ENCODE measurements at regions of chr6 and their contacts with region 1.

Region 1: DNA sequence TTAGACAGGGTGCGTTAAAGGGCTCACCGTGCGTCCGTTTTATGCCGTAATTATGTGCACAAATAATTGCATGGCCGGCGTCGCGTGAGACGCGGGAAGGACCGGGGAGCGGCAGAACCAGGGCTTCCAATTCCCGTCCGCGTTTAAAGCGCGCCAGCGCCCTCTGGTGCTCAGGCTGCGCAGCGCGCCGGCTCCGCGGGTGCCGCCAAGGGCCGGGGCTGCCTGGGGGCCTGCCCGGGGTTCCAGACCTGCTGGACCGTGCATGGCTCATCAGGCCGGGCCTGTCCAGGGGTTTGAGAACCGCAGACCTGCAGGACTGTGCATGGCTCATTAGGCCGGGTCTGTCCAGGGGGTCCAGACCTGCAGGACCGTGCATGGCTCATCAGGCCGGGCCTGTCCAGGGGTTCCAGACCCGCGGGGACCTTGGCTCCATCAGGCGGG is 369.0 kb downstream of the THBS2 start:
- DNase-seq: peak; percentile 85
- H3K4me3 ChIP-seq: peak overlapping the region in 2 of 4 donors; percentile 21 to 29
- H3K27ac ChIP-seq: no peak overlapping the region
- H3K4me1 ChIP-seq: peaks cover 0 to 17% (median 6%) of the 10 kb centered on the region in 4 donors
- H3K27me3 ChIP-seq: no peaks in the 10 kb centered on the region
- CTCF ChIP-seq: peak; percentile 72 to 97 (median 89)
- EP300 ChIP-seq: no peak
- POLR2A ChIP-seq: no peak

Region 2: DNA sequence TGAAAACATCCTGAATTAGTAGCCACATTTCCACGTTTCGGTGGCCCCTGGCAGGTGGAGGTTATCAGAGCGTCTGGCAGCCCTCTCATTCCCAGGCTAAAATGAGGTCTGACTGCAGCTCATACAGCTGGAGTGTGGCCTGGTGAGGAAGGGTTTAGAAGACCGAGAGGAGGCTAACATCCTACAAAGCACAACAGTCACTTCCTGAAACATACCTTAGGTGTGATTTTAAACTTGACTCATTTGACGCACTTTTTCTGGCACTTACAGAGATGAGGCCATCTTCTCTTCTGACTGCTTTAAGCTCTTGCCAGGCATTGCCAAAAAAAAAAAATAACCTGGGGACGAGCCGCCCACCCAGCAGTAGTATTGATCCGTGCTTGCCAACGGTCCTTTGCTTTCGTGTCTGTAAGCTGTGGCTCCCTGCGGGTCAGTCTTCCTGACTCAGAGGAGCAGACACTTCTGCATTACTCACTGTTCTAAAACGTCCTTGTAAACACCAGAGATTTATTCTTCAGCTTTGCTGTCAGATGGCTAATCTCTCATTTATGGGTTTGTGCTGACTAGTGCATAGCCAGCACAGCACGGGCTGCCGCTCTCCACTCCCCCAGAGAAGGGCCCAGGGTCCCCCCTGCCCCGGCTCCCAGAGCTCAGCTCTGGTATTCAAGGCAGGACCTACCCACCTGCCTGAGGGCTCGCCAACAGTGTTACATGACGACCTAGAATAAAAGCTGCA is 727.2 kb before region 1 on chr6:
- intact Hi-C with region 1: loop called (anchors 10 kb)
- DNase-seq: peak; percentile 74
- H3K4me3 ChIP-seq: peak overlapping the region in 2 of 4 donors; percentile 3 to 28
- H3K27ac ChIP-seq: peak overlapping the region; percentile 42 to 83 (median 78)
- H3K4me1 ChIP-seq: peaks cover 2 to 80% (median 62%) of the 10 kb centered on the region in 4 donors
- H3K27me3 ChIP-seq: no peaks in the 10 kb centered on the region
- CTCF ChIP-seq: no peak
- EP300 ChIP-seq: peak; percentile 46 to 95 (median 78)
- POLR2A ChIP-seq: no peak

Region 3: DNA sequence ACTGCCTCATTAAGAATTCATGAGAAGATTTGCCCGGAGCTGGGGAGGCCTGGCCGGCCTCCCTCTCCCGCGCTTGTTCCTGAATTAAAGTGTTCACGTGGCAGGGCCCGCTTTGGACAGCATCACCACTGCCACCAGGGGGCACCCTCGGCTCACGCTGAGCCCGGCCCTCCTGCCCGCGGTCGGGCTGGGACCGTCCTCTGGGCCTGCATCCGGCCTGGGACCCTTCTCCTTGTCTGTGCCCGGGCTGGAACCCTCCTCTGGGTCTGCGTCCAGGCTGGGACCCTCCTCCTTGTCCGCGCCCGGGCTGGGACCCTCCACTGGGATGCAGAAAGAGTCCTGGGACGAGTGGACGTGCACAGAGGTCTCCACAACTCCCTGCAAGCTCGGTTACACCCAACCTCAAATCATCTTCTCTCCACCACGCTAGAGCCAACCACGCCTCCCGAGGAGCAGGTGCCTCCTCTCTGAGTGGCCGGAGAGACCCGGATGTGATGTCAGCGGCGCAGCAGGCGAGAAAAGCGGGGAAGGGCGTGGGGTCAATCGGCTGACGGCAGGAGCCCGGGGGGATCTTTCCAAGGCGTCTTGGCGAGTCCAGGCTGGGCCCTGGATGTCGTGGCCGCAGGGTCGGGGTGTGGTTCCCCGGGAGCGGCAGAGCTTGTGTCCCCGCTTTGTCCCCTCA is 514.2 kb before region 1 on chr6:
- intact Hi-C with region 1: loop called (anchors 1 kb)
- DNase-seq: peak; percentile 89
- H3K4me3 ChIP-seq: no peak overlapping the region
- H3K27ac ChIP-seq: no peak overlapping the region
- H3K4me1 ChIP-seq: peaks cover 0 to 29% (median 16%) of the 10 kb centered on the region in 4 donors
- H3K27me3 ChIP-seq: no peaks in the 10 kb centered on the region
- CTCF ChIP-seq: peak; percentile 78 to 94 (median 86)
- EP300 ChIP-seq: no peak
- POLR2A ChIP-seq: no peak

Region 4: DNA sequence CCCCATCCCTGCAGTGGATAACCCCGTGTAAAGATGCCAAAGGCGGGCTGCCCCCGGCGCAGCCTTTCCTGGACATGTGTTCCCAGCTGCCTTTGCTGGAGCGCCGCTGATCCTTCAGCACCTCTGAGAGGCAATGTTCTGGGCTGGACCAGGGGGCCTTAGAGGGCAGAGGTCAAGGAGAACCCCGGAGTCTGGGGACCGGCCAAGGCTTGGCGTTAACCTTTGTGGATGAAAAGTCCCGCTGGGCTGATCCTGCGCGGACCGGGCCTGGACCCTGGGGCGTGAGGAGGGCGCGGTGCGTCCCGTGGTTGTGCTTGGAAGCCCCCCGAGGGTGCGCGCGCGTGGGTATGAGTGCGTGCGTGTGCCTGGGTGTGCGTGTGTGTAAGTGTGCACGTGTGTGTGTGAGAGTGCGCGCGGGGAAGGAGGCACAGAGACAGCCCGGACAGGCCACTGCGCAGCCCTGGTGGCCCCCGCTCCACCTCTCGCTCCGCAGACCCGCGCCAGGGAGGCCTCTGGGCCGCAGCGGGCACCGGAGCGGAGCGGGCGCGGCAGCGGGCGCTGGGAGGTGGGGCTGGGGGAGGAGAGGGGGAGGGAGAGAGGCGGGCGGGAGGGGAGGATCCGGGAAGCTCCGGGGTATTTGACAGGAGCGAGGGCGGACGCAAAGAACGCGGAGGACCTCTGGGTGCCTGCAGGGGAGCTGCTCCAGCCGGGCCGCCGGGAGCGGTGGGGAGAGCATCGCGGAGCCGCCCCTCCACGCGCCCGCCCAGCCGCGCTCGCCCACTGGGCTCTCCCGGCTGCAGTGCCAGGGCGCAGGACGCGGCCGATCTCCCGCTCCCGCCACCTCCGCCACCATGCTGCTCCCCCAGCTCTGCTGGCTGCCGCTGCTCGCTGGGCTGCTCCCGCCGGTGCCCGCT is 443.9 kb before region 1 on chr6 and contains the start of gene SMOC2:
- intact Hi-C with region 1: loop called (anchors 10 kb)
- DNase-seq: no peak
- H3K4me3 ChIP-seq: peak within 1 kb of the TSS; percentile 49 to 75 (median 58)
- H3K27ac ChIP-seq: peak within 1 kb of the TSS; percentile 43 to 68 (median 56)
- H3K4me1 ChIP-seq: peaks cover 0 to 33% (median 24%) of the 10 kb centered on the region in 4 donors
- H3K27me3 ChIP-seq: peaks cover 0 to 16% (median 15%) of the 10 kb centered on the region in 3 donors
- CTCF ChIP-seq: no peak
- EP300 ChIP-seq: no peak
- POLR2A ChIP-seq: no peak
- total RNA-seq, gene SMOC2: 23.9 to 130 (median 52.9) TPM

Region 5: DNA sequence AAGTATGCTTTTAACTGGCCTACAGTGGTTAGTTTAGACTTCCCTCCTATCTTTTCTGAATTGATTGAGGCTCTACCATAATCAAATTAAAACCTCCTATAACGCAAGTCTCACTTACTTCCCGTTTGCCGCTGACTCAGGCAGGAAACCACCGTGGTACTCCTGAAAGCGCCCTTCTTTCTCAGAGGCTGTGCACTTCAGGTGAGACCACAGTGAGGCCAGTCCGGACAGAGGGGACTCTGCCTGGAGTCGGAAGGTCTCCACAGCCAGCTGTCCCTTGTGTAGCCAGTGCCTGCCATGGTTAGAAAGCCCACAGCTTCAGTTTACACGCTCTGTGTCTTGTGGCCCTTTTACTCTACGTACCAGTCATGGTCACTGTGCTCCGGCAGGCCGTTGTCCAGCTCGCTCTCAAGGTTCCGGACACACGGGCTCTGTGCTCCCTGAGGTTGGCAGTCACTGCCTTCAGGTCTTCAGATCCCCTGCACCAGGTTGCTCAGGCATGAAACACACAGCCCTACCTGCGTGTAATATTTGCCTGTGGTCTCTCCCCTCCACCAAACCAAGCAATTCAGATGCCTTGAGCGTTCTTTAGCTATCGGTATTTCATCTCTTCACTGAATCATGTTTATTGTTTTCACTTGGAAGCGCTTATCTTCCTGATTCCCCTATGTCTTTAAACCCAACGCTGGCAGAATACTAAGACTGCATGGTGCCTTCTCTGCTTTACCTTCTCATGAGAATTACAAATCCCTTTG is 264.9 kb before region 1 on chr6:
- intact Hi-C with region 1: loop called (anchors 10 kb)
- DNase-seq: peak; percentile 27
- H3K4me3 ChIP-seq: no peak overlapping the region
- H3K27ac ChIP-seq: no peak overlapping the region
- H3K4me1 ChIP-seq: no peaks in the 10 kb centered on the region
- H3K27me3 ChIP-seq: no peaks in the 10 kb centered on the region
- CTCF ChIP-seq: no peak
- EP300 ChIP-seq: no peak
- POLR2A ChIP-seq: no peak

Measured in sigmoid colon (tissue), 7 donors.